ENCODE measurements at regions of chr2 and their contacts with region 1.

Region 1: DNA sequence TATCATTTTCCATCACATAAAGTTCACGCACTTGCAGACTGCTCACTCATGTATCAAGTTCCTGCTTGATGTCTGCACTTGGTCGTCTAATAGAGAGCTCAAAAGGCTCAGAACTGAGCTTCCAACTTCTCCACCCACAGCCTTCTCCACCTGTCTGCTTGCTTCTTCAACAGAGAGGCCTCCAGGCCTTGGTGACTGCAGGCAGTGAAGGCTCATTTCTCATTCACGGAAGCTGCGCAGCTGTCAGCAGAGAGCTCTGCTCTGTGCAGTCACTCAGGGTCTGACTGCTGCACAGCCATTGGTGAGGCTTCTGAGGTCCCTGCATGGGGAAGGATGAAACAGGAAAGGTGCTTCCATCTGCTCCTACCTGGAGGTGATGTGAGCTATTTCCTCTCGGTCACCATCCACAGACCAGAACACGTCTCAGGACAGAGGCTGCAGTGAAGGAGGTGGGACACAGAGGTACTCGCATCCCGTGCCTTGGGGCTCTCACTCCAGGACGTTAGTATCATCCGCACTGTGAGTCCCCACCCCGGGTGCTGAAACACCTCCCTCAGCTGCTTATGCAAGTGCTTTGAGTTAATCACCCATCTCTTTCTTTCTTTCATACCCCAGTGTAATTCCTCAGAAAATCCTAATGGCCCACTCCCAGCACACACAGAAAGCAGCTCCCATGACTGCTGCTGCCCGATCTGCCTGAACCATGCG is 126.2 kb downstream of the TMEM18 start:
- DNase-seq: no peak
- ATAC-seq: peak; percentile 78
- H3K4me3 Mint-ChIP-seq: peak overlapping the region; percentile 32
- H3K27ac Mint-ChIP-seq: peak overlapping the region; percentile 62
- H3K4me1 Mint-ChIP-seq: peaks cover 54% of the 10 kb centered on the region
- H3K27me3 Mint-ChIP-seq: peaks cover 4% of the 10 kb centered on the region
- CTCF ChIP-seq: no peak

Region 2: GRCh38 chr2:429575-430254 is 121.3 kb before region 1 on chr2:
- CTCF ChIA-PET with region 1: no interaction called
- POLR2A ChIA-PET with region 1: interaction called, 3 read pairs
- intact Hi-C with region 1: loop called (anchors 5 kb)
- DNase-seq: no peak
- ATAC-seq: peak; percentile 81
- H3K4me3 Mint-ChIP-seq: peak overlapping the region; percentile 79
- H3K27ac Mint-ChIP-seq: peak overlapping the region; percentile 80
- H3K4me1 Mint-ChIP-seq: peaks cover 29% of the 10 kb centered on the region
- H3K27me3 Mint-ChIP-seq: no peaks in the 10 kb centered on the region
- CTCF ChIP-seq: no peak

Region 3: DNA sequence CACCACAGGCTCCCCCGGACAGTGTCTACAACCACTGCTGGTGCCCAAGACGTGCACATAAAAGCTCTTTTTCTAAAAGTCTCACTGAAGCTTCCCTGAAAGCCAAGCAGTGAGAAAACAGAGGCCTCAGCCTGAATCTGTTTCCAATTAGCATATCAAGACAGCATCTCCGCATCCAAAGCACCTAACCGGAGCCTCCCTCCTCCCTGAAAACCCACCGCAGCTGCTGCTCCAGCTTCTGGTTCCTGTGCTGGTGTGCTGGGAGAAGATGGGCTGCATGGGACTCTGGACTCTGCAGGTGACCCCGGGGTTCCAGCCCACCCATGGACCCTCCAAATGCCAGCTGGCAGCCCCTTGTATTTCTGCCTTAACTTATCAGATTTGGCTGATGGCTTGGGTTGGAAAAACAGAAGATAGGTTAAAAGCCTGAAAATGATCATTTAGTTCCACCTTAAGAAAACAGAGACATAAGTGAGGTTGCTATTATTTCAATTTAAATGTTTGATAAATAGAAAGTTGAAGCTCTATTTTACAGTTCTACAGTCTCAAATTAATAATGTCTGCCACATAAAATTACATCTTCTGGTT is 22.9 kb after region 1 on chr2:
- CTCF ChIA-PET with region 1: no interaction called
- POLR2A ChIA-PET with region 1: no interaction called
- intact Hi-C with region 1: no loop called
- DNase-seq: no peak
- ATAC-seq: no peak
- H3K4me3 Mint-ChIP-seq: no peak overlapping the region
- H3K27ac Mint-ChIP-seq: no peak overlapping the region
- H3K4me1 Mint-ChIP-seq: no peaks in the 10 kb centered on the region
- H3K27me3 Mint-ChIP-seq: peaks cover 30% of the 10 kb centered on the region
- CTCF ChIP-seq: no peak

Region 4: GRCh38 chr2:584863-585823 is 34.1 kb after region 1 on chr2:
- CTCF ChIA-PET with region 1: no interaction called
- POLR2A ChIA-PET with region 1: no interaction called
- intact Hi-C with region 1: loop called (anchors 5 kb)
- DNase-seq: no peak
- ATAC-seq: peak; percentile 91
- H3K4me3 Mint-ChIP-seq: peak overlapping the region; percentile 56
- H3K27ac Mint-ChIP-seq: peak overlapping the region; percentile 18
- H3K4me1 Mint-ChIP-seq: peaks cover 14% of the 10 kb centered on the region
- H3K27me3 Mint-ChIP-seq: peaks cover 21% of the 10 kb centered on the region
- CTCF ChIP-seq: no peak

Region 5: DNA sequence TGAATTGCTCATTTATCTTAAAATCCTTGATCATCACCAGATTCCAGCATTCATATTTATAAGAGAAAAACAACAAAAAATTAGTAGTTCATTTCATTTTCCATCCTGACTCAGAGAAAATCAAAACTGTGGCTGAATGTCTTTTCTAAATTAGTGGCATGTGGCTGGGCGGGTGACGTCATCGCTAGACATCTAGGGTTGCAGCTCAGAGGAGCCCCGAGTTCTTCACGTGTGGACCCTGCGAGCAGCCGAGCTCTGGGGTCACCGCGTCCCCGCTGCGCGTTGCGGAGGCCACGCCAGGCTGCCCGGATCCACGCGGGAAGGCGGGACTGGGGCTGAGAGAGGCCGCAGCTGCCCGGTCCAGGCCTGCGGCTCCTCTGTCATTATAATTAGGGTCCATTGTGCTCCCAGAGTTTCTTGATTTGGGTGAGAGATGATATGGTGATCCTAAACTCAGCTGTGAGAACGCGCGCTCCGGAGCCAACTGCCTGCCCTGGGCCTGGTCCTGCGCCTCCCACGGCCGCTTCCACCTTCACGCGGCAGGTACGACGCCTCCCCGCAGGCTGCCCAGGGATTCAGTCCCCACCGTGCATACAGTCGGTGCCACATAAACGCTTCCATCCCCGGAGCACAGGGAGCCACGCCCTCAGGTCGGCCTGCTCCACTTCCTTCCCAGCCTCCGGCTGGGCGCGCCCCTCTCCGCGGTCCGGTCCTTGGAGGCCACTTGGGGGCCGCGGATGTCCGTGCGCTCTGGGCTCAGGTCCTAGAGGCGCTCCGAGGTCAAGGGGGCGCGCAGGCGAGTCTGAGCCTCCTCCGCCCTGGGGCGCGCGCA is 69.7 kb after region 1 on chr2:
- CTCF ChIA-PET with region 1: no interaction called
- POLR2A ChIA-PET with region 1: no interaction called
- intact Hi-C with region 1: no loop called
- DNase-seq: no peak
- ATAC-seq: no peak
- H3K4me3 Mint-ChIP-seq: no peak overlapping the region
- H3K27ac Mint-ChIP-seq: no peak overlapping the region
- H3K4me1 Mint-ChIP-seq: no peaks in the 10 kb centered on the region
- H3K27me3 Mint-ChIP-seq: peaks cover 5% of the 10 kb centered on the region
- CTCF ChIP-seq: no peak